Heart right ventricle (tissue), 16 donors: ENCODE measurements at regions of chr20 and their contacts with region 1.

Region 1: GRCh38 chr20:24382743-24383142 is 86.7 kb upstream of the SYNDIG1 start:
- DNase-seq: no peak
- ATAC-seq: peak in 3 of 8 donors; percentile 14 to 36 (median 17)
- H3K4me3 ChIP-seq: no peak overlapping the region
- H3K27ac ChIP-seq: no peak overlapping the region
- H3K4me1 ChIP-seq: peaks cover 0 to 10% (median 0%) of the 10 kb centered on the region in 9 donors
- H3K27me3 ChIP-seq: peaks cover 0 to 7% (median 0%) of the 10 kb centered on the region in 7 donors
- CTCF ChIP-seq: no peak

Region 2: DNA sequence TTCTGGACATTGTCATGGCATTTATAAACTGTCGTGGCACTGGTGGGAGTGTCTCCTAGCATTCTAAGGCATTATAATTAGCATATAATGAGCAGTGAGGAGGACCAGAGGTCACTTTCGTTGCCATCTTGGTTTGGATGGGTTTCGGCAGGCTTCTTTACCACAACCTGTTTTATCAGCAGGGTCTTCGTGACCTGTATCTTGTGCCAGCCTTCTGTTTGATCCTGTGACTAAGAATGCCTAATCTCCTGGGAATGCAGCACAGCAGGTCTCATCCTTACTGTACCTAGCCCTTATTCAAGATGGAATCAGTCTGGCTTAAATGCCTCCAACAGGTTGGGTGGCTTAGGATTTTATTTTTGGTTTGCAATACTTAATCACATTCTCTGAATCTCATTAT is 251.5 kb before region 1 on chr20:
- intact Hi-C with region 1: no loop called
- DNase-seq: no peak
- ATAC-seq: no peak
- H3K4me3 ChIP-seq: no peak overlapping the region
- H3K27ac ChIP-seq: no peak overlapping the region
- H3K4me1 ChIP-seq: no peaks in the 10 kb centered on the region
- H3K27me3 ChIP-seq: peaks cover 0 to 6% (median 0%) of the 10 kb centered on the region in 7 donors
- CTCF ChIP-seq: no peak

Region 3: DNA sequence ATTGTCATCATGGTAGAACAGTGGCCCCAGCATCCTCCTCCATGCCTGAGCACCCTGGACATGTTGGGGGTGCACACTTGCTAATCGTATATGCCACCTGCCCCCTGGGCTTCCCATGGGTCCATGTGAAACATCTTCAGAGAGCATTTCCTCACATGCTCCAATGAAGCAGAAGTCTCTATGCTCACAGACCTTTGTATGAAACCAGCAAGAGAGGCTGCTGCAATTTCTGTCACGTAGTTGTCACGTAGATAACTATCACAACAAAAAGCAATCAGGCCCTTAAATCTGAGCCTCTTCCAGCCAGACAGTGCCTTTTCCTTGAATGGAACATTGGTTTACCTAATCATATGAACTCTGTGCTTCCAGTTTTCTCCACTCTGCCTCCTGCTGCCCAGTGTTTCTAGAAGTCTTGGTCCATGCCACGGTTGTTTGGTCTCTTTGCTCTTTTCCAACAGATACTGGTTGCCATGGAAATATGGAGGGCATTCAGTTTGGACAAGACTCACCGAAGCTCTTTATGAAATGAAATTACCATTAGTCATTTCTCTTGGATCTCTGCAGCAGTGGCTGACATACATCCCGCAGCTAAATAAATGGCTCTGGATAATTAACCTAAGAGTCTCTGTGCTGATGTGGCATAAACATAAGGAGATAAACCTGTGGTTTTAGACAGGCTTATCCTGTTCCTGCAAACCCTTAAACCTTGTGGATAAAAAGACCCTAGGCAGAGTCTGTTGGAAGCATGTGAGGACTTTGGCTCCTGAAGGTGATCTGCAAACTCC is 86.1 kb before region 1 on chr20:
- intact Hi-C with region 1: no loop called
- DNase-seq: no peak
- ATAC-seq: no peak
- H3K4me3 ChIP-seq: no peak overlapping the region
- H3K27ac ChIP-seq: no peak overlapping the region
- H3K4me1 ChIP-seq: no peaks in the 10 kb centered on the region
- H3K27me3 ChIP-seq: peaks cover 0 to 6% (median 3%) of the 10 kb centered on the region in 7 donors
- CTCF ChIP-seq: no peak

Region 4: DNA sequence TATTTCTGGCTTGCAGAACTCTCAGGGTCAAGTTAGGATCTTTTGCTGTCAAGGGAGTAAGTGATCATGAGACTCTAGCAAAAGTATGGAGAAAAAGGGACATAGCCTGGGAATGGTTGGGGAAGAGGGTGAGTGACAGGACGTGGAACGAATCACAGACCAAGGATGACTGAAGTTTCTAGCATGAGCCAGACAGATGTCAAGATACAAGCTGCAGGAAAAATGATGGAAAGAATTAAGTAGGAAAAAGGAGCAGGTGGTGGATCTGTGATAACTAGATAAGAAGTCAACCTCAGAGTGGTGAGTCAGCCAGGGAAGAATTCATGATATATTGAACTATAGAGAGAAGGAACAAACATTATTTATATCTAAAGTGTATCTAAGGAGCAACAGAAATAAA is 73.1 kb before region 1 on chr20:
- intact Hi-C with region 1: loop called in 1 of 10 experiments (anchors 5 kb)
- DNase-seq: no peak
- ATAC-seq: no peak
- H3K4me3 ChIP-seq: no peak overlapping the region
- H3K27ac ChIP-seq: no peak overlapping the region
- H3K4me1 ChIP-seq: no peaks in the 10 kb centered on the region
- H3K27me3 ChIP-seq: peaks cover 0 to 24% (median 6%) of the 10 kb centered on the region in 7 donors
- CTCF ChIP-seq: no peak

Region 5: DNA sequence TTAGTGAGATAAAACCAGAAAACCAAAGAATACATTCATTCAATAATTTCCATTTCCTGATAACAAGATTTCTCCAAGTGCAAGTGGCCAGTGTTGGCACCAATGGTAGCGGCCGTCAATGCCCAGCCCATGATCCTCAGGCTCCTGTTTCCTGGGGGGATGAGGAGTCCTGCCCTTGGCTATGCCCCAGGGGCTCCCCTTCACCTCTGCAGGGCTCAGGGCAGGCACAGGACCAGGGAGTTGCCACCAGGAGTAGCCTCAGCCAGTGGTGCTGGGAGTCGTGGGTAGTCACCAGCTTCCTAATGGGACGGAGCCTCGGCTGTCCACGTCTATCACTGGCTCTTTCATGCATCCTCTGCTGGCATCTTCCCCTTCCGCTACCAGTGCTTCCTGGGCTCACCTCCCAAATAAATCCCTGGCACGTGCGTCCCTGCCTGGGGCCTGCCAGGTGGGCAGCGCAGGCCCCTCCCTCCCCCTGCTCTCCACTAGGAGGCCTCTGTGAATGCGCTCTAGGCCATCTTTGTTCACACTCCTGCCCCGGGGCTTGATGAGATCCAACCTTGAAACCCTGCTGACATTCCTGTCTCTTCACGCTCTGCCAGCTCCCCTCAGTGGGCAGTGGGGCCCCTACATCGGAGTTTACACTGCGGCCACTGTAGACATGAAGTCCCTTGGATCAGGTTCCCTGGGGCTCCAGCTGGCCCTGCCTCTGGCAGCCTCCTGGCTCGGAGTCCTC is 302.4 kb after region 1 on chr20:
- intact Hi-C with region 1: no loop called
- DNase-seq: no peak
- ATAC-seq: no peak
- H3K4me3 ChIP-seq: no peak overlapping the region
- H3K27ac ChIP-seq: no peak overlapping the region
- H3K4me1 ChIP-seq: no peaks in the 10 kb centered on the region
- H3K27me3 ChIP-seq: peaks cover 0 to 5% (median 0%) of the 10 kb centered on the region in 7 donors
- CTCF ChIP-seq: no peak